ENCODE measurements at regions of chr1 and their contacts with region 1.

Region 1: GRCh38 chr1:54273092-54273794 is 73.3 kb downstream of the MRPL37 start:
- DNase-seq: peak in 1 of 2 donors; percentile 97
- H3K4me3 ChIP-seq: peak overlapping the region; percentile 10 to 19
- H3K27ac ChIP-seq: peak overlapping the region; percentile 97
- H3K4me1 ChIP-seq: peaks cover 84% of the 10 kb centered on the region
- H3K27me3 ChIP-seq: no peaks in the 10 kb centered on the region
- CTCF ChIP-seq: peak in 2 of 3 experiments; percentile 62 to 70
- POLR2A ChIP-seq: no peak

Region 2: DNA sequence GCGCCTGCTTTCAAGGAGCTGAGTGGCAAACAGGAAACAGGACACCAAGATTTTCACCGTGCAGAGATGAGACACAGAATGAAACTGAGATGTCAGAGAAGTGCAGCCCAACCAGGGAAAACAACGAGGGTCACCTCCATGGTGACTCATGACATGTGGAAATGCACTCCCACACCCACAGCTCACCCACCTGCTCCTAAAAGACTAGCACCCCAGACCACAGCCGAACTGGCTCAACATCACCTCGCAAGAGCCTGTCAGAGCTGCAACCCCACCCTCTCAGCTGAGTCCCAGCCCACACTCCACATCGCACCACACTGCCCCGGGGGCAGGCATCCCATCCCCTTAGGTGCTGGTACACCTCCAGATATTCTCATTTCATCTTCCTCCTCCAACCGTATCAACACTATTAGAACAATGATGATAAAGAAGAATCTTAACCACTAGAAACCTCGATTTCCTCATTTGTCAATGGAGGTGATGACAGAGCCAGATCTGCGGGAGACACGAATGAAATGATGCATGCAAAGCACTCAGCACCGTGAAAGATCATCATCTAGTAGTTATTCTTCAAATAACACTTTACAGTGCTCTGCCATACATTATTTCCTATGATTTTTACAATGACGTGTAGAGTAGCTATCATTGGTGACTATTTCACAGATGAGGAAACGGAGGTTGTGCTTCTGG is 710.8 kb before region 1 on chr1:
- intact Hi-C with region 1: no loop called
- DNase-seq: no peak
- H3K4me3 ChIP-seq: no peak overlapping the region
- H3K27ac ChIP-seq: no peak overlapping the region
- H3K4me1 ChIP-seq: no peaks in the 10 kb centered on the region
- H3K27me3 ChIP-seq: no peaks in the 10 kb centered on the region
- CTCF ChIP-seq: no peak
- POLR2A ChIP-seq: no peak

Region 3: GRCh38 chr1:54323324-54323739 is 50.1 kb after region 1 on chr1:
- intact Hi-C with region 1: loop called (anchors 5 kb)
- DNase-seq: no peak
- H3K4me3 ChIP-seq: no peak overlapping the region
- H3K27ac ChIP-seq: peak overlapping the region; percentile 74
- H3K4me1 ChIP-seq: peaks cover 92% of the 10 kb centered on the region
- H3K27me3 ChIP-seq: no peaks in the 10 kb centered on the region
- CTCF ChIP-seq: no peak
- POLR2A ChIP-seq: no peak

Region 4: DNA sequence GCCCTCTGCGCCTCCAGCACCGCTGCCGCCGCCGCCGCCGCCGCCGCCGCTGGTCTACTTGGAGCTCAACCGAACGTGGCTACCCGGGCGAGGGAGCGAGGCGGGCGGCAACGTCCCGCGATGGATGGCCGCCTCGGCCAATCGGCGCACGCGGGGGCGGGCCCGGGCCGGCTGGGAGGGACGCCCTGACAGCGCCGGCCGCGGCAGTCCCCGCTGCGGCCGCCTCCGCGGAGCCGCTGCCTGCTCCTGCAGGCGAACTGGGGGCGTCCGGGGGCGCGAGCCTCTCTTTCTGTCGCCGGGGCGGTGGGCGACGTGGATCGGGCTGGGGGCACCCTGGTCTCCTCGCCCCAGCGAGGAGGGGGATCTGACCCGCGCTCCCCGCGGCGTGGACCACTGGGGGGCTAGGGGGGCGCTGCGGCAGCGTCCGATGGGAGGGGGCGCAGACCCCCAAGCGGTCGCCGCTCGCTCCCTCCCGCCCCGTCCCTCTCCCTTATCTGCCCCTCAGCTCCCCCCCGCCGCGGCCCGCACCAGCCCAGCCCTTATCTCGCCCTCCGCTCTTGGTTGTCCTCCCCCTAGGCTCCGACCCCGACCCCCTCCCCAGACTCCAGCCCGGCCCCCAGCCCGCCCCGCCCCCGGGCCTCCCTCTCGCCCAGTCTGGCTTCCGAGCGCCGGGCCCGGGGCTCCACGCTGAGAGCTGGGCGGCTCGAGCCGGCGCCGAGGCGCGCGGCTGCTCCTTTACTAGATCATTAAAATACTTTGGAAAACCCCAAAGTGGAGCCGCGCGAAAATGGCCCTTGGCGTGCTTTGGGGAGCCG is 133.3 kb after region 1 on chr1 and contains the start of gene SSBP3:
- intact Hi-C with region 1: loop called (anchors 2 kb)
- DNase-seq: no peak
- H3K4me3 ChIP-seq: peak within 1 kb of the TSS; percentile 79 to 98
- H3K27ac ChIP-seq: peak within 1 kb of the TSS; percentile 97
- H3K4me1 ChIP-seq: peaks cover 66% of the 10 kb centered on the region
- H3K27me3 ChIP-seq: no peaks in the 10 kb centered on the region
- CTCF ChIP-seq: peak in 1 of 3 experiments; percentile 27
- POLR2A ChIP-seq: peak in 1 of 2 donors; percentile 90
- total RNA-seq, gene SSBP3: 70.7 TPM

Region 5: DNA sequence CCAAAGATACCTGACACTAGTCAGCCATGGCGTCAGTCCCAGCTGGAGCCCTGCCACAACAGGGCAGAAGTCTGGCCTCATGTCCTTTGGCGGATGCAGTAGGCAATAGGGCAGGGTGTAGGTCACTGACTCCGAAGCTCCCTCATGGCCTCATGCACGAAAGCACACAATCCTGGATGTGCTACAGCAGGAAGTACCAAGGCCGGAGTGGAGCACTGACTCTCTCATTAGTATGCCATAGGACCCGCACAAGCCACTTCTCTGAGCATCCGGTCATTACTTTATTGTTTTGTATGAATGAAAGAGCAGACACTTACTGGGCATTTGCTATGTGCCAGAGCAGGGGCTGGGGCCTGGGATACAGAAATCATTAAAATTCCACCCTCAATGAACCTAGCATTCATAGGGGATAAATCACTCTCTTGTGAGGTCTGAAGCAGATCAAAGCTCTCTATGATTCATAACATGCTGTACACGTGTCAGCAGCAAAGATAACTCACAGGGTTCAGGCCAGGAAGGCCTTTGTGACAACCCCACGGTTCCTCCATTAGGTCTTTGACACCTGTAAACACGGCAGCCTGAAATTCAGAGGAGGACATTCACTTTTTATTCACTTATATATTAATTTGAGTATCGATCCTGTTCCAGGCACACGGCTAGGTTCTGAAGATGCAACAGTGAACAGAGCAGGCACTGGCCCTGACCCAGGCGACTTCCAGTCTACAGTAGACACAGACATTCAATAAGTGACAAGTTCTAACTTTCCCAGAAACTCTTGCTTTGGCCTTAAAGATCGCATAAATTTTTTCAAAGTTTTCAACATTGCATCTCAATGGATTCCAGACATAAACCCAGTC is 1299.9 kb after region 1 on chr1:
- intact Hi-C with region 1: no loop called
- DNase-seq: peak in 1 of 2 donors; percentile 77
- H3K4me3 ChIP-seq: no peak overlapping the region
- H3K27ac ChIP-seq: peak overlapping the region; percentile 91
- H3K4me1 ChIP-seq: peaks cover 7% of the 10 kb centered on the region
- H3K27me3 ChIP-seq: no peaks in the 10 kb centered on the region
- CTCF ChIP-seq: no peak
- POLR2A ChIP-seq: no peak